ENCODE measurements at regions of chr6 and their contacts with region 1.

Region 1: DNA sequence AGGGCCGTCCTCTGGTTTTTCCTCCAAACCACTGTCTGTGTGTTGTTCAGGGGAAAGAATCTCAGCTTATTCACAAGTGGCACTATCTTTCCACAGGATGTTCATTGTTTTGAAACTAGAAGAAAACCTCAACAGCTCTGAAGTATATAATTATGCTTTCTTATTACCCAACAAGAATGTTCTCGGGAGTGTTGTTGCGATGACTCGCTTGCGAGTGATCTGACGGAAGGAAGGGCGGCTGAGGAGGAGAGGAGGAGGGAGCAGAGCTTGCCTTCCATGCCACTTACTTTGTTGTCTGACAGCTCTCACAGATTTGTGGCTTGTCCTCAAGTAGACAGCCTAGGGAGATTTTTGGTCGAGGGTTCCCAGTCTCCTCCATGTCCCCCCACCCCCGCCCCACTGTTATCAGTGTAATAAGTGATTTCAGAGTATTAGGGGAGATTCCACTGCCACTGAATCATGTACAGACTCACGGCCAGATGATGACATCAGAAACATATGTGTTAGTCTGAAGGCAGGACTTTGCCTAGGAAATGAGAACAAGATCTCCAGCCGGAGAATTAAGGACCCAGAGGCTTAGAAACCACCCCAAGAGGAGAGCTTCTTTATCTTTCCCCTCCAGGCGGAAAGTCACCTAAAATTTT is 80.7 kb upstream of the CCN6 start:
- DNase-seq: peak; percentile 48 to 92 (median 68)
- ATAC-seq: peak; percentile 90
- H3K4me3 ChIP-seq: peak overlapping the region; percentile 8
- H3K4me3 Mint-ChIP-seq: peak overlapping the region; percentile 68
- H3K27ac ChIP-seq: peak overlapping the region; percentile 82 to 93
- H3K27ac Mint-ChIP-seq: peak overlapping the region; percentile 93
- H3K4me1 ChIP-seq: peaks cover 42% of the 10 kb centered on the region
- H3K4me1 Mint-ChIP-seq: peaks cover 82% of the 10 kb centered on the region
- H3K27me3 ChIP-seq: no peaks in the 10 kb centered on the region
- H3K27me3 Mint-ChIP-seq: no peaks in the 10 kb centered on the region
- CTCF ChIP-seq: no peak

Region 2: GRCh38 chr6:111925296-111925695 is 47.9 kb before region 1 on chr6:
- CTCF ChIA-PET with region 1: no interaction called
- POLR2A ChIA-PET with region 1: no interaction called
- intact Hi-C with region 1: loop called in 1 of 2 experiments (anchors 5 kb)
- DNase-seq: peak in 2 of 14 experiments; percentile 22 to 34
- ATAC-seq: no peak
- H3K4me3 ChIP-seq: no peak overlapping the region
- H3K4me3 Mint-ChIP-seq: no peak overlapping the region
- H3K27ac ChIP-seq: no peak overlapping the region
- H3K27ac Mint-ChIP-seq: no peak overlapping the region
- H3K4me1 ChIP-seq: peaks cover 7% of the 10 kb centered on the region
- H3K4me1 Mint-ChIP-seq: no peaks in the 10 kb centered on the region
- H3K27me3 ChIP-seq: no peaks in the 10 kb centered on the region
- H3K27me3 Mint-ChIP-seq: no peaks in the 10 kb centered on the region
- CTCF ChIP-seq: no peak

Region 3: GRCh38 chr6:111958534-111958933 is 14.7 kb before region 1 on chr6:
- CTCF ChIA-PET with region 1: interaction called, 3 read pairs
- POLR2A ChIA-PET with region 1: interaction called, 10 read pairs
- intact Hi-C with region 1: no loop called
- DNase-seq: peak in 1 of 14 experiments; percentile 45
- ATAC-seq: no peak
- H3K4me3 ChIP-seq: no peak overlapping the region
- H3K4me3 Mint-ChIP-seq: no peak overlapping the region
- H3K27ac ChIP-seq: no peak overlapping the region
- H3K27ac Mint-ChIP-seq: no peak overlapping the region
- H3K4me1 ChIP-seq: no peaks in the 10 kb centered on the region
- H3K4me1 Mint-ChIP-seq: no peaks in the 10 kb centered on the region
- H3K27me3 ChIP-seq: no peaks in the 10 kb centered on the region
- H3K27me3 Mint-ChIP-seq: no peaks in the 10 kb centered on the region
- CTCF ChIP-seq: no peak

Region 4: GRCh38 chr6:111985202-111985731 is 12.0 kb after region 1 on chr6:
- CTCF ChIA-PET with region 1: interaction called, 8 read pairs
- POLR2A ChIA-PET with region 1: interaction called, 75 read pairs
- intact Hi-C with region 1: no loop called
- DNase-seq: peak in 7 of 14 experiments; percentile 15 to 79 (median 58)
- ATAC-seq: peak; percentile 68
- H3K4me3 ChIP-seq: no peak overlapping the region
- H3K4me3 Mint-ChIP-seq: peak overlapping the region; percentile 45
- H3K27ac ChIP-seq: peak overlapping the region in 1 of 2 donors; percentile 4
- H3K27ac Mint-ChIP-seq: peak overlapping the region; percentile 77
- H3K4me1 ChIP-seq: peaks cover 63% of the 10 kb centered on the region
- H3K4me1 Mint-ChIP-seq: peaks cover 95% of the 10 kb centered on the region
- H3K27me3 ChIP-seq: no peaks in the 10 kb centered on the region
- H3K27me3 Mint-ChIP-seq: no peaks in the 10 kb centered on the region
- CTCF ChIP-seq: no peak

Region 5: DNA sequence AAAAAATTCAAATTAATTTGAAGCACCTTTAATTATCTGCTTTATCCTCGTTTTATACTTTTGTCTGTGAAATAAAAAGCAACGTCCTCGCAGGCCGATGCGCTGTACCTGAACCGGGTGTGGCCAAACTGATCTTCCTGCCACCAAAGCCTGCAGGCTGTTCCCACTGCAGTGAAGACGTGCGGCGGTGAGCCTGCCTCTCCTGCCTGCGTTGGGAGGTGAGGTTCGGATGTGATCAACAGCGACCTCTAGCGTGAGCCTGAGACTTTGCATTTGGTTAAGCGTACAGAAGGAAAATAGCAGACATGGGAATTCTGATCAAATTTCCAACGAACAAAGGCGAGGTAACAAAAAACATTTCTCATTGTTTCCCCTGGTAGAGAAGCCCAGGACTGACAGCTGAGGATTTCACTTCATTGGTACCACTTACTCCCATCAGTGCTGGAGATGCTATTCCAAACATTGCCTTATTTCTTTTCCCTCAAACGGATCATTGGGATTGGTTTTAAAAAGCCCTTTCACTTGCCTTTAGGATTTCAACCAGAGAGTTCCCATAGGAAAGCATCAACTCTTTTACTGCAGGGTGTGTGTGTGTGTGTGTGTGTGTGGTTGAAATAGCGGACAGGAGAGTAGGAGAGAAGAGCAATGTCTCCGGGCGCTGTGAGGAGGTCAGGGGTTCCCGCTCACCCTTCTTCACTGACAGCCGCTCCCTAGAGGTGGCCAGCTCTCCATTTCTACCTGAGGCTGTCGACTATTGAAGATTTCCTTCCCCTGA is 24.0 kb after region 1 on chr6:
- CTCF ChIA-PET with region 1: interaction called, 12 read pairs
- POLR2A ChIA-PET with region 1: interaction called, 75 read pairs
- intact Hi-C with region 1: loop called in 1 of 2 experiments (anchors 1 kb)
- DNase-seq: peak; percentile 61 to 92 (median 76)
- ATAC-seq: peak; percentile 70
- H3K4me3 ChIP-seq: peak overlapping the region; percentile 8
- H3K4me3 Mint-ChIP-seq: peak overlapping the region; percentile 75
- H3K27ac ChIP-seq: no peak overlapping the region
- H3K27ac Mint-ChIP-seq: peak overlapping the region; percentile 82
- H3K4me1 ChIP-seq: peaks cover 40% of the 10 kb centered on the region
- H3K4me1 Mint-ChIP-seq: peaks cover 55% of the 10 kb centered on the region
- H3K27me3 ChIP-seq: no peaks in the 10 kb centered on the region
- H3K27me3 Mint-ChIP-seq: no peaks in the 10 kb centered on the region
- CTCF ChIP-seq: peak; percentile 93

Region 6: GRCh38 chr6:113495506-113495905 is 1522.3 kb after region 1 on chr6:
- CTCF ChIA-PET with region 1: no interaction called
- POLR2A ChIA-PET with region 1: no interaction called
- intact Hi-C with region 1: no loop called
- DNase-seq: no peak
- ATAC-seq: no peak
- H3K4me3 ChIP-seq: no peak overlapping the region
- H3K4me3 Mint-ChIP-seq: no peak overlapping the region
- H3K27ac ChIP-seq: no peak overlapping the region
- H3K27ac Mint-ChIP-seq: no peak overlapping the region
- H3K4me1 ChIP-seq: no peaks in the 10 kb centered on the region
- H3K4me1 Mint-ChIP-seq: no peaks in the 10 kb centered on the region
- H3K27me3 ChIP-seq: no peaks in the 10 kb centered on the region
- H3K27me3 Mint-ChIP-seq: no peaks in the 10 kb centered on the region
- CTCF ChIP-seq: no peak